PC-9 (cell line): ENCODE measurements at regions of chr6 and their contacts with region 1.

Region 1: DNA sequence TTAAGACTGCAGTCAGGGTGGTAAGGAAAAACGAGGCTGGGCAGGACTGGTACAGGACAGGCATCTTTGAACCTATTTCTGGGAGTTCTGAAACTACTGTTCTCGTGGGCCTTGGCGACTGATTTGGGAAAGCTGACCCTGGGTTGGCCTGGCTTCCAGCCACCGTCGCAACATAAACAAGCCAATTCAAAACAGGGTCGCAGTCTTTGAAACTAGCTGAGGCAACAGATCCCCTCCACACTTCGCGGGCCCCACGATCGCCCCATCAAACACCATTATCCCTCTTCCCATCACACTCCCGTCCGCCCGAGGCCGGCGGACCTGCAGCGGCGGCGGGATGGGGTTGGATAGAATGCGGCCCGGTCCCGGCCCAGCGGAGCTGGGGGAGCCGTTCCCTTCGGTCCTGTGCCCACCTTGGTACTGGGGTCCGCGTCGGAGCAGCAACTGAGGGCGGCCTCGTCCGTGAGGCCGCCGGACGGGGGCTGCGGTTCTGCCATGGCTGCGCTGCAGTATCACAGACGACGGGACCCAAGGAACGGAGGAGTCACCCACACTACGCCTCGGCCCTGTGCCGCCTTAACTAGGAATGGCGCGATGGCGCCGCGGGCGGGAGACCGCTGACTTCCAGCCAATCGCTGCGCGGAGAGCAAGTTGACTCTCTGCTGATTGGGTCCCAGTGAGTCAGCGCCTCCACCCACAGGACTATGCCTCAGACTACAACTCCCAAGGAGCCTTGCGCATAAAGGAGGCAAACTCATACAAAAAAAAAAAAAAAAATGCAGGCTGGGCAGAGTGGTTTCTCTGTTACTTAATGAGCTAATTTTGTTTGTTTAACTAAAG is at the start of gene GLO1:
- DNase-seq: peak; percentile 96 to 97
- H3K4me3 ChIP-seq: peak within 1 kb of the TSS; percentile 83
- H3K27ac ChIP-seq: peak within 1 kb of the TSS; percentile 82
- H3K4me1 ChIP-seq: no peaks in the 10 kb centered on the region
- H3K27me3 ChIP-seq: no peaks in the 10 kb centered on the region
- CTCF ChIP-seq: no peak
- total RNA-seq, gene GLO1: 77.1 and 118 TPM in 2 replicates

Region 2: DNA sequence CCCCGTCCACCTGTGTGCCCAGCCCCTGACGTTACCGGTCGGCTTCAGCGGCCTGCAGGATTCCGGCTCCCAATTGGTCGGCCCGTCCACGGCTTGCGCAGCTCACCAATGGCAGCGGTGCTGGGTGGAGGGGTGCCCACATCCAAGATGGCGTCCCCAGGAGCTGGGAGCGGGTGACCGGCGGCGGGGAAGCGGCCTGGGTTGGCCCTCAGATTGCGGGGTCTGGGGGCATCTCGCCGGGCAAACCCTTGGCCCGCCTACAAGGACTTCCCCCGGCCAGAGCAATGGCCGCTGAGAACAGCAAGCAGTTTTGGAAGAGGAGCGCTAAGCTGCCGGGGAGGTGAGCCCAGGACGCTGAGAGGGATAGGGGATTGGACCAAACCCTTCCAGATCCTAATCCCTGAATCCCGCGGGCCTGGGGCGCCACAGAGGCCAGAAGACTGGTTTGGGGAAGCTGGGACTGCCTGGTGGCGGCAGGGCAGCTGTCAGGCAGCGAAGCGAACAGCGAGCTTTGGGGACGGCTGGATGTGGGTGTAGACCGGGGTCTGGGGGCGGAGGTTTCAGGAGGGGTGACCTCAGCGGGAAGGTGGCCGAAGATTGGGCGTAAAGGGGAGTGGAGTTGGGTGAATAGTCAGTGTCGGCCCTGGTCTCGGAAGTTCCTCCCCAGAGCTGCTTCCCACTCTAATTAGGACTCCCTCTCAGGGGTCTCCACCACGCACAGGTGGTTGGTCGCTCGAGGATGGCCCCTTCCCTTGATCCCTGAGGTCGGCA is 1445.0 kb before region 1 on chr6 and contains the starts of genes TBC1D22B and TMEM217:
- CTCF ChIA-PET with region 1: no interaction called
- POLR2A ChIA-PET with region 1: interaction called, 18 read pairs
- intact Hi-C with region 1: no loop called
- DNase-seq: peak; percentile 57 to 97
- H3K4me3 ChIP-seq: peak within 1 kb of the TSS; percentile 95
- H3K27ac ChIP-seq: peak within 1 kb of the TSS; percentile 75
- H3K4me1 ChIP-seq: peaks cover 25% of the 10 kb centered on the region; the same call in 1 of the 2 replicates
- H3K27me3 ChIP-seq: no peaks in the 10 kb centered on the region
- CTCF ChIP-seq: no peak
- total RNA-seq, gene TBC1D22B: 10.4 and 14.6 TPM in 2 replicates
- total RNA-seq, gene TMEM217: 4.9 and 5.3 TPM in 2 replicates

Region 3: DNA sequence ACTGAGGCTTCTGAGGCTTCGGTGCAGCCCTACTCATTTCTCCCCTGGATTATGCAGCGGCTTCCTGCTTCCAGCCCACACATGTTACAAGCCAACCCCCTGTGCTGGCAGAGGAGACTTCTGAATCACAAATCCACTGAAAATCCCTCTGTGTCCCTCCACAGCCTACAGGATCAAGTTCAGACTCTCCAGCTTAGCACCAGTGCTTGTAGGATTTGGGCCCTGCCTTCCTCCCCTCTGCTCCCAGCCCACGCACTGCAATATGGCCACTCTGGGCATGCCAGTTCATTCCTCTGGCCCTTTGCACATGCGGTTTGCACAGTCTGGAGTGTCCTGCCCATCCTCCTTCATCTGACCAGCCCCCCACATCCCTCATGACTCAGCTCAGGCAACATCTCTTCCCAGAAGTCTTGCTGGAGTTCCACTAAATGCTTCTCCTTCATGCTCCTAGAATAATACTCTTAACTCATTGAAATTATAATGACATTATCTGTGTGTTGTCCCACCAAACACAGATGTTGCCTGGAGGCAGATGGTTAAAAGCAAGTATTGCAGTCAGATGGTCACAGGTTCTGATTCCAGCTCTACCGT is 989.2 kb before region 1 on chr6:
- CTCF ChIA-PET with region 1: no interaction called
- POLR2A ChIA-PET with region 1: interaction called, 27 read pairs
- intact Hi-C with region 1: no loop called
- DNase-seq: no peak
- H3K4me3 ChIP-seq: no peak overlapping the region
- H3K27ac ChIP-seq: no peak overlapping the region
- H3K4me1 ChIP-seq: no peaks in the 10 kb centered on the region
- H3K27me3 ChIP-seq: no peaks in the 10 kb centered on the region
- CTCF ChIP-seq: no peak

Region 4: DNA sequence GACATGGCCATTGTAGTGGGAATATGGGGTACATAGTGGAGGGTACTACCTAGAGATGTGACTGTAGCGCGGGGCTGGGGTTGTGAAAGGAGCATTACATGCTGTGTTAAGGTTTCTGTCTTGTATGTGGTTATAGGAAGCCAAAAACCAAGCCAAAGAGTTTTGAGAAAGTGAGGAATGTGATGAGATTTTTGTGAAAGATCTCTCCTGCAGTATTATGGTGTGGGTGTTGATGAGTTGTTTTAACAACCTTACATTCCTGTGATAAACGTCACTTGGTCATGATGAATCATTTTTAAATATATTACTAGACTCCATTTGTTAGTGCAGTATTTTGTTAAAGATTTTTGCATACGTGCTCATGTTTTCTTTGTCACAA is 834.3 kb before region 1 on chr6:
- CTCF ChIA-PET with region 1: no interaction called
- POLR2A ChIA-PET with region 1: interaction called, 16 read pairs
- intact Hi-C with region 1: no loop called
- DNase-seq: peak; percentile 2 to 76
- H3K4me3 ChIP-seq: no peak overlapping the region
- H3K27ac ChIP-seq: peak overlapping the region; percentile 34; the same call in 1 of the 2 replicates
- H3K4me1 ChIP-seq: peaks cover 18% of the 10 kb centered on the region
- H3K27me3 ChIP-seq: no peaks in the 10 kb centered on the region
- CTCF ChIP-seq: no peak

Region 5: DNA sequence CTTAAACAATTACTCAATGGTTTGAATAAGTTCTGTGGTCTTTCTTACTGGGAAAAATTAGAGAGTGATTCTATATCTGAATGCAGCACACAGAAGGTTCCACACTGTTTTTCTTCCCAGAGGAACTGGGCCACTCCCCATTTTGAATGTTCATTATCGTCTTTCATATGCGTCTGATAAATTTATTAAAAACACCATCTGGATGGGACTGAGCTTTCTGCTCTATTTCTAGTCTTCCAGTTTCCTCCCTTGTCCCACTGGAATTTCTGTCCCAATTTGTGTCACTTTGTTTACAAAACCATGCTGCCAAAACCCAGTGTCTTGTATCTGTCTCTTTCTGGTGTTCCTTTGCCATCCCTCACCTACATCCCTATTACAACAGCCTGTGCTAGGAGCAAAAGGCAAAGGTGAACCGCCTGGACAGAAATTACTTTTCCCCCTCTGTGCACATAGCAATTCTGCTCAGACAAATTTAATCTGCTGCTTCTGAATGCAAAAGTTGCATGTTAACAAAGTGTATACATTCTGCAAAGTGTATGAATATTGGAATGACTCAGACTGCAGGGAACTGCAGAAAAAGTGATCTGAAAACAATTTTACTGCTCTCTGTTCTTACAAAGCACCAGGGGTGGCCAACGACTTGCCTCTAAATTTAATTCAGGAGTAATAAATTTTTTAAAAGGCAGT is 396.6 kb before region 1 on chr6:
- CTCF ChIA-PET with region 1: no interaction called
- POLR2A ChIA-PET with region 1: no interaction called
- intact Hi-C with region 1: no loop called
- DNase-seq: no peak
- H3K4me3 ChIP-seq: no peak overlapping the region
- H3K27ac ChIP-seq: no peak overlapping the region
- H3K4me1 ChIP-seq: peaks cover 9% of the 10 kb centered on the region; the same call in 1 of the 2 replicates
- H3K27me3 ChIP-seq: no peaks in the 10 kb centered on the region
- CTCF ChIP-seq: no peak

Region 6: GRCh38 chr6:38688579-38689087 is 14.1 kb before region 1 on chr6:
- CTCF ChIA-PET with region 1: interaction called, 14 read pairs
- POLR2A ChIA-PET with region 1: no interaction called
- intact Hi-C with region 1: no loop called
- DNase-seq: no peak
- H3K4me3 ChIP-seq: no peak overlapping the region
- H3K27ac ChIP-seq: no peak overlapping the region
- H3K4me1 ChIP-seq: no peaks in the 10 kb centered on the region
- H3K27me3 ChIP-seq: no peaks in the 10 kb centered on the region
- CTCF ChIP-seq: no peak

Region 7: GRCh38 chr6:38773338-38773737 is 70.6 kb after region 1 on chr6:
- CTCF ChIA-PET with region 1: interaction called, 10 read pairs
- POLR2A ChIA-PET with region 1: no interaction called
- intact Hi-C with region 1: no loop called
- DNase-seq: no peak
- H3K4me3 ChIP-seq: no peak overlapping the region
- H3K27ac ChIP-seq: no peak overlapping the region
- H3K4me1 ChIP-seq: no peaks in the 10 kb centered on the region
- H3K27me3 ChIP-seq: no peaks in the 10 kb centered on the region
- CTCF ChIP-seq: peak; percentile 69

Region 8: DNA sequence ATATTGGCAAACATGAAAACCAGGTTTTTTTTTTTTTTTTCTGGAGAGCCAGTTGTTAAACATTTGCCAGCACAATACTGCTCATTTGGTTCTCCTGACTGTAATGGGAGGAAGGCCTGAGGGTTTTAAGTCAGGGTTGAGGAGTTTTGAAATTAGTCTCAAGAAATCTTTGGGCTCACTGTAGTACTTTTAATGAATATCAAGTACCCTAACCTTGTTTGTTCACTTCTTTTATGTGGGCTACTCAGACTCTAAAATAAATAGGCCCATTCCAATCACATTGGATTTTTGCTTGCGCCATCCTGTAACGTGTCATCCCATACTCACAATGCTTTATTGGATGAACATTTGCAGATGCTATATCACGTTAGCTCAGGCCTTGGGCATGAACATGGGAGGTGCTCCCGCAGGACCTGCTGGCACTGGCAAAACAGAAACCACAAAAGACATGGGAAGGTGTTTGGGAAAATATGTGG is 159.2 kb after region 1 on chr6:
- CTCF ChIA-PET with region 1: no interaction called
- POLR2A ChIA-PET with region 1: no interaction called
- intact Hi-C with region 1: no loop called
- DNase-seq: no peak
- H3K4me3 ChIP-seq: no peak overlapping the region
- H3K27ac ChIP-seq: no peak overlapping the region
- H3K4me1 ChIP-seq: no peaks in the 10 kb centered on the region
- H3K27me3 ChIP-seq: no peaks in the 10 kb centered on the region; the same call in 1 of the 2 replicates
- CTCF ChIP-seq: no peak